ENCODE measurements at regions of chr19 and their contacts with region 1.

Region 1: GRCh38 chr19:42108527-42109389 is 23.5 kb downstream of the POU2F2 start:
- DNase-seq: peak; percentile 94
- H3K4me3 Mint-ChIP-seq: no peak overlapping the region
- H3K27ac Mint-ChIP-seq: peak overlapping the region; percentile 28
- H3K4me1 Mint-ChIP-seq: peaks cover 33% of the 10 kb centered on the region
- H3K27me3 Mint-ChIP-seq: no peaks in the 10 kb centered on the region

Region 2: DNA sequence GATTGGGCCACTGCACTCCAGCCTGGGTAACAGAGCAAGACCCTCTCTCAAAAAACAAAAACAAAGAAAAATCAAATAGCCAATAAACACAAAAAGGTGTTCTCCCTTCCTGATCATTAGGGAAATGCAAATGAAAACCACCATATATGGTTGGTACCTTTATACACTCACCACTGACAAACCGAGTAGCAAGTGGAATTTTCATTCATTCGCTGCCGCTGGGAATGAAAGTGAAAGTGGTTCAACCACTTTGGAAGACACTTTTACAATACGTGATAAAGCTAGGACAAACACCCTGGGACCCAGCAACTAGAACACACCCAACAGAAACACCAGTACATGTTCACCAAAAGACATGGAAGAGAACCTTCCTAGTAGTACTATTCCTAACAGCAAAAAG is 59.8 kb before region 1 on chr19:
- CTCF ChIA-PET with region 1: no interaction called
- DNase-seq: peak; percentile 43
- H3K4me3 Mint-ChIP-seq: peak overlapping the region; percentile 19
- H3K27ac Mint-ChIP-seq: peak overlapping the region; percentile 77
- H3K4me1 Mint-ChIP-seq: peaks cover 8% of the 10 kb centered on the region
- H3K27me3 Mint-ChIP-seq: peaks cover 11% of the 10 kb centered on the region

Region 3: DNA sequence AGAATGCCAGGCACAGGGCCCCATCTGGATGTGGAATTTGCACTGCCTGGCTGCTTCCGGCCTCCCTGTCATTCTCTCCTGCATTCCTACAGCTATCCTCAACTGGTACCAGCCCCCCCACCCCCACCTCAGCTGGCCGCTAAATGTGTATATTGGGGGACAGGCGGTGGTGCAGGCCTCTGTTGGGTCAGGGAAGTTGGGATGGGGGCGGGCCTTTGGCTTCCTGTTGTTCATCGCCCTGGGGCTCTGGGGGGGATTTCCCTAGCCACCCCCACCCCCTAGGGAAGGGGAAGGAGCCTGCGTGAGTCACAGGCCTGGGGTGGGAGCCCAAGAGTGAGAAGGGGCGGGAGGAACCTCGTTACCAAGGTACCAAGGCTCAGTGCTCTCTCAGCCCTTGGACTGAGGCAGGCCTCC is 12.9 kb after region 1 on chr19:
- CTCF ChIA-PET with region 1: interaction called, 42 read pairs
- DNase-seq: peak; percentile 76
- H3K4me3 Mint-ChIP-seq: peak overlapping the region; percentile 67
- H3K27ac Mint-ChIP-seq: peak overlapping the region; percentile 86
- H3K4me1 Mint-ChIP-seq: peaks cover 42% of the 10 kb centered on the region
- H3K27me3 Mint-ChIP-seq: no peaks in the 10 kb centered on the region

Region 4: DNA sequence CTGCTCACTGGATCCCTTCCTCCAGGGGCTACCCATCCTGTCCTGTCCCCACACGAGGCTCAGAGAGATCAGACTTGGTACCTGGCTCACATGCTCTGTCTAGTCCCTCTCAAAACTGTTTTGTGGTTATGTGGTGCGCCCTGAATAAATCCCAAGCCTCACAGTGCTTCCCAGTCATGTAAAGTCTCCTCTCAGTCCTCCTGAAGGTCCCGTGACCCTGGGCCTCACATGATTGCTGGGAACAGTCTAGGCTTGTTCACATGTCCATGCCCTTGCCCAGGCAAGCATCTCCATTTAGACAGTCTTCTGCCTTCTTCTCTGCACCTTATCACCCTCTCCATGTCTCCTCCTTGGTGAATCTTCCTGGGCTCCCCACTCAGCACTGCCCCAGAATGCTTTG is 59.4 kb after region 1 on chr19:
- CTCF ChIA-PET with region 1: no interaction called
- DNase-seq: no peak
- H3K4me3 Mint-ChIP-seq: no peak overlapping the region
- H3K27ac Mint-ChIP-seq: no peak overlapping the region
- H3K4me1 Mint-ChIP-seq: no peaks in the 10 kb centered on the region
- H3K27me3 Mint-ChIP-seq: peaks cover 27% of the 10 kb centered on the region

Region 5: DNA sequence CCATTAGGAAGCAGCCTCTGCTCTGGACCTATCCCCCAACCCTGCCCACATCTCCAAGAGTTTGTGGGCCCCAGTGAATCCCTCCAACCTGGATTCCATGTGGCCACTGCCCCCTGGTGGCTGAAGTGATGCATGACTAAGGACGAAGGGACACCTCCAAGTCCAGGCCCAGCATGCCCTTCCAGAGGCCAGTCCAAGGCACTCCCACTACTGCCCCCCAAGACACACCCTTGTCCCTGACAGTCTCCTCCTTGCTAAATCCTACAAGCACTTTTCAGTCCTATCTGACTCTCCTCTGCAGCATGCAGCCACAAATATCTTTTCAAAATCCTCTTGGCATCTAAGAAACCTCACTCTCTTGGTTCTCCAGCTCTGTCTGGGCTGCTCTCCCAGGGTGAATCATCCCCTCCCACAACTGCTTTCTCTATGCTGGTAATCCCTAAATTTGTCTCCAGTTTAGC is 75.7 kb after region 1 on chr19:
- CTCF ChIA-PET with region 1: interaction called, 17 read pairs
- DNase-seq: peak; percentile 78
- H3K4me3 Mint-ChIP-seq: no peak overlapping the region
- H3K27ac Mint-ChIP-seq: peak overlapping the region; percentile 60
- H3K4me1 Mint-ChIP-seq: peaks cover 52% of the 10 kb centered on the region
- H3K27me3 Mint-ChIP-seq: peaks cover 25% of the 10 kb centered on the region

Region 6: DNA sequence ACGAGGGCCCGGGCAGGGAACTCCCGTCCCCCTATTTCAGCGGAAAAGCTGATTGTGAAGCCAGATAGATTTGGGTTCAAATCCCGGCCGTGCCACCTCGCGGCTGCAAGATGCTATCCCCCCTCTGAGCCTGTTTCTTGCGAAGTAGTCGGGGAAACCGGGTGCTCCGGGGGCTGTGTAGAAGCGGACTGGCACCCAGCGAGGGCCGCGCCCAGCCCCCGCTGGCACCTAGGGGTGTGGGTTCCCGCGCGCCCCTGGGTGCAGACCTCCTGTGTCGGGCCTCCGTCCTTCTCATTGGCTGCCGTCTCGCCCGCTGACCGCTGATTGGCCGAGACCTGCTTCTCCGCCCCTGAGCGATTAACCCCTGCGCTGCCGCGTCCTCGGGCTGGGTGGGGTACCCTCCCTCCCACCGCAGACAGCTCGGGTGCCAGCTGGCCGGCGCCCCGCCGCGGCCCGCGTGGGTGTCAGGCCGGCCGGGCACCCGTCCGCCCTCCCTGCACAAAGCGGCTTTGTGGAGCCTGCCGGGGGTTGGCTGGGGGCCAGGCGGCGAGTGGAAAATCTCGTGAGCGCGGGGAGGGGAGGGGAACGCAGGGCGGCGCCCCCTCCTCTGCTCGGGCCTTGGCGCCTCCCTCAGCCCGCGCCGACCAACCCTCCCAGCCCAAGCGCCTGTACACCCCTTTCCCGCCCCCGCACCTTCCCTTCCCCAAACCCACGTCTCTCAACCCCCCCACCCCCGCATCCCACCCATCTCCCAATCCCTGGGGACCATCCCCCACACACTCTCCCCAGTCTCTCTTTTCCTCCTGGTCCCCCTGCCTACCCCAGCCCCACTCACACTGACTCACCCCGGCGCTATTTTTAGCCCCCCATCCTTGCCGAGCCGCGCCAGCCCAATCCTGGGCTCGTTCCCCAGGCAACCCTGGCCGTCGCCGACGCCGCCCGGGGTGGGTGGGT is 171.7 kb after region 1 on chr19:
- CTCF ChIA-PET with region 1: interaction called, 18 read pairs
- DNase-seq: peak; percentile 92
- H3K4me3 Mint-ChIP-seq: peak overlapping the region; percentile 83
- H3K27ac Mint-ChIP-seq: peak overlapping the region; percentile 82
- H3K4me1 Mint-ChIP-seq: peaks cover 44% of the 10 kb centered on the region
- H3K27me3 Mint-ChIP-seq: no peaks in the 10 kb centered on the region

Region 7: DNA sequence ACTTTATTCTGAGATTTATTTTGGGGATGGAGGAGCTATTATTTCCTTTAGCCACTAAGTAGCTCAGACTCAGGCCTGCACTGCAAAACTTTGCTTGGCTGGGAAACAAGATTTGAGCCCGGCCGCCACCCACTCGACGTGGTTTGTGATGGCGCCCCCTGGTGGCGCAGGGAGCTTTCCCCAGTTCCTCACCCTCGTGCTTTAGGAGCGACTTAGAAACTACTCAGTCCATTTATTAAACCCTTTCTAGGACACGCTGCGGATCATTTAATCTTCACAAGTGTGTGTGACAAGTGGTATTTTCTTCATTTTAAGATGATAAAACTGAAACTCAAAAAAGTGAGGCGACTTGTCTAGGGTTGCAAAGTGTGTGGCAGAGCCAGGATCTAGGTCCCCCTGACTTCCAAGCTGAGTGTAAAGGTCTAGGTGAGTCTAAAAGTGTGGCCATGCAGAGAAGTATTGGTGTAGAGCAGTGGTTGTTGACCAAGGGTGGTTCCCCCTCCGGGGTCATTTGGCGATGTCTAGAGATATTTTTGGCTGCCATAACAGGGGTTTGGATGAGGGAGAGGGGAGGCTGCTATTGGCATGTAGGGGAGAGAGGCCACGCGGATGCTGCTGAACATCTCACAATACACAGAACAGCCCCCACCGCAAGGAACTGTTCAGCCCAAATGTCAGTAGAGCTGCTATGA is 331.7 kb after region 1 on chr19:
- CTCF ChIA-PET with region 1: interaction called, 17 read pairs
- DNase-seq: peak; percentile 85
- H3K4me3 Mint-ChIP-seq: no peak overlapping the region
- H3K27ac Mint-ChIP-seq: no peak overlapping the region
- H3K4me1 Mint-ChIP-seq: peaks cover 23% of the 10 kb centered on the region
- H3K27me3 Mint-ChIP-seq: peaks cover 47% of the 10 kb centered on the region